SK-N-SH (cell line): ENCODE measurements at regions of chr2 and their contacts with region 1.

Region 1: GRCh38 chr2:189287982-189288521 is 108.5 kb upstream of the COL5A2 start:
- DNase-seq: peak; percentile 23
- H3K4me3 ChIP-seq: no peak overlapping the region; a peak in 1 of 4 replicates
- H3K27ac ChIP-seq: peak overlapping the region; percentile 88 to 98; a peak in 3 of 4 replicates
- H3K4me1 ChIP-seq: peaks cover 3 to 34% of the 10 kb centered on the region in 2 experiments
- H3K27me3 ChIP-seq: no peaks in the 10 kb centered on the region
- CTCF ChIP-seq: peak; percentile 75
- EP300 ChIP-seq: no peak
- RAD21 ChIP-seq: peak; percentile 88

Region 2: GRCh38 chr2:189115126-189115525 is 172.9 kb before region 1 on chr2:
- CTCF ChIA-PET with region 1: interaction called, 13 read pairs
- POLR2A ChIA-PET with region 1: no interaction called
- DNase-seq: no peak
- H3K4me3 ChIP-seq: no peak overlapping the region
- H3K27ac ChIP-seq: peak overlapping the region; percentile 89 to 94
- H3K4me1 ChIP-seq: peaks cover 4 to 42% of the 10 kb centered on the region in 2 experiments; a peak in 3 of 4 replicates
- H3K27me3 ChIP-seq: no peaks in the 10 kb centered on the region
- CTCF ChIP-seq: peak; percentile 60
- EP300 ChIP-seq: no peak
- RAD21 ChIP-seq: peak; percentile 62